ENCODE measurements at regions of chr2 and their contacts with region 1.

Region 1: DNA sequence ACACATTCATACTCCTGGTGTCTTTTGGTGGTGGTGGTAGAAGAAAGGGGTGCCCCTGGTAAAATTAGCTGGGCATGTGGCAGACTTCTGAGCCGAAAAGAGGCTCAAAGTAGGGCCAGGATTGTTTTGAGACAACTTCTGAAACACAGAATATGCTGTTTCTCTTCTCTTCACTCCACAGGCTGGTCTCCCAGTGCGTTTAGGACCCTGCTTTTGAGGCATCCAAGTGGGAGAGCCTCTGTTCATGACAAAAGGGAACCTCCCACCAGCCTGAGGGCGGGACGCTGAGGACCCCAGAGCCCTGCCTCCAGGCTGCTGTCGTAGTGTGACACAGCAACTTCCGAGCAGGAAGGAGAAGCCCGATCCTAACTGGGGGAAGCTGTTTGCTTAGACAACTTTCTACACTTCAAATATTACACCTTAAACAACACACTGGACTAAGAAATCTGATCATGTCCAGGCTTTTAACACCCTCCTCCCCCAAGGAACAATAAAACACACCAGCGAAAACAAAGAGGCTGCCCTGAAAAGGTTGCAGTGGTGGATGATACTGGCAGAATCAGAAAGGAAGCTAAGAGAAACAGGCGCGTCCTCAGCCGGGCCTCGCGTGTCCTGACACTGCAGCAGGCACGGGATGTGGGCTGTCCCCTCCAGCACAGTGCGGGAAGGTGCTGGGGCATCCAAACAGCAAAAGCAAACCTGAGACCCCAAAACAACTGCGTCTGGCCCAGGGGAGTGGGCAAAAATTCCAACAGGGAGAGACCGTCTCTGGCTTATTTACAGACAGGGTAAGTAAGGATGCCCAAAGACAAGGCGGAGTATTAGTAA is 9.3 kb downstream of the SERTAD2 start:
- DNase-seq: no peak
- H3K4me3 ChIP-seq: peak overlapping the region in 1 of 2 experiments; percentile 22; a peak in 2 of 4 replicates
- H3K27ac ChIP-seq: peak overlapping the region in 1 of 2 experiments; percentile 38; a peak in 3 of 4 replicates
- H3K4me1 ChIP-seq: peaks cover 20 to 62% of the 10 kb centered on the region in 2 experiments
- H3K27me3 ChIP-seq: no peaks in the 10 kb centered on the region
- CTCF ChIP-seq: no peak
- EP300 ChIP-seq: no peak
- RAD21 ChIP-seq: no peak

Region 2: DNA sequence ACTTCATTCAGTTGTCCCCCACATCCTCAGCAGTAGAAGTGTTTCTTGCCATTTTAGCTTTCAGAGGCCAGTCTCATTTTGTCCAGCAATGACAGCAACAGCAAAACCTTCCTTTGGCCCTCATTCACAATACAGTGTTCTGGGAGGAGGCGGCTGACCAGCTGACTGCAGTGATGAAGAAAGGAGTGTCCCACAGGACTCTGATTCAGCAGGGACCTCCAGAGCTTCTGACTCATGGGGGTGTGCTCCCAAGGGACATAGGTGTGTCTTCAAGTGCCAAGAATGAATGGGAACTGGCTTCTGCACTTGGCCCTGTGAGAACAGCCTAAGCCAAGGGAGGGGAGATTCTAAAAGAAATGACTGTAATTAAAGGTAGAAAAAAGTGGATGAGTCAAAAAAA is 353.2 kb before region 1 on chr2:
- CTCF ChIA-PET with region 1: no interaction called
- POLR2A ChIA-PET with region 1: no interaction called
- DNase-seq: no peak
- H3K4me3 ChIP-seq: no peak overlapping the region
- H3K27ac ChIP-seq: no peak overlapping the region
- H3K4me1 ChIP-seq: peaks cover 0 to 7% of the 10 kb centered on the region in 2 experiments; a peak in 1 of 4 replicates
- H3K27me3 ChIP-seq: no peaks in the 10 kb centered on the region; the same call in 1 of the 2 replicates
- CTCF ChIP-seq: no peak
- EP300 ChIP-seq: no peak
- RAD21 ChIP-seq: no peak

Region 3: DNA sequence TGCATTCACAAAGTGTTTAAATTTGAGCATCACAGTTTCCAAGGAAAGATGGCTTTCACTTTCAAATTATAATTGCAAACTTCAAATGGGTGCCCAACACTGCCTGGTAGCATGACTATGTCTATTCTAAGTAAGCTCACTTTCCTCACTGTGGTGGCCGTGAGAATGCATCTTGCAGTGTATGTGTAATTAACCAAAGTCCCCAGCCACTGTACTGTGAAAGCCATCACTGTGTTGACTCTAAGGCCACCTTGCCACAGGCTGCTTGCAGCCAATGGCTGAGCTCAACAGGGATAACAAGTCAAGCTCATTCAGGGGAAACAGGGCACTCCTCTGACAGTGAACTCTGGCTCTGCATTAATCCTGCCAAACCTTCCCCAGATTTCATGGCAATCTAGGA is 233.7 kb before region 1 on chr2:
- CTCF ChIA-PET with region 1: no interaction called
- POLR2A ChIA-PET with region 1: no interaction called
- DNase-seq: no peak
- H3K4me3 ChIP-seq: no peak overlapping the region
- H3K27ac ChIP-seq: no peak overlapping the region
- H3K4me1 ChIP-seq: no peaks in the 10 kb centered on the region; a peak in 1 of 4 replicates
- H3K27me3 ChIP-seq: peaks cover 6% of the 10 kb centered on the region; the same call in 1 of the 2 replicates
- CTCF ChIP-seq: no peak
- EP300 ChIP-seq: no peak
- RAD21 ChIP-seq: no peak

Region 4: GRCh38 chr2:64548761-64549160 is 95.6 kb before region 1 on chr2:
- CTCF ChIA-PET with region 1: no interaction called
- POLR2A ChIA-PET with region 1: no interaction called
- DNase-seq: no peak
- H3K4me3 ChIP-seq: no peak overlapping the region
- H3K27ac ChIP-seq: no peak overlapping the region
- H3K4me1 ChIP-seq: no peaks in the 10 kb centered on the region
- H3K27me3 ChIP-seq: no peaks in the 10 kb centered on the region
- CTCF ChIP-seq: no peak
- EP300 ChIP-seq: no peak
- RAD21 ChIP-seq: no peak

Region 5: DNA sequence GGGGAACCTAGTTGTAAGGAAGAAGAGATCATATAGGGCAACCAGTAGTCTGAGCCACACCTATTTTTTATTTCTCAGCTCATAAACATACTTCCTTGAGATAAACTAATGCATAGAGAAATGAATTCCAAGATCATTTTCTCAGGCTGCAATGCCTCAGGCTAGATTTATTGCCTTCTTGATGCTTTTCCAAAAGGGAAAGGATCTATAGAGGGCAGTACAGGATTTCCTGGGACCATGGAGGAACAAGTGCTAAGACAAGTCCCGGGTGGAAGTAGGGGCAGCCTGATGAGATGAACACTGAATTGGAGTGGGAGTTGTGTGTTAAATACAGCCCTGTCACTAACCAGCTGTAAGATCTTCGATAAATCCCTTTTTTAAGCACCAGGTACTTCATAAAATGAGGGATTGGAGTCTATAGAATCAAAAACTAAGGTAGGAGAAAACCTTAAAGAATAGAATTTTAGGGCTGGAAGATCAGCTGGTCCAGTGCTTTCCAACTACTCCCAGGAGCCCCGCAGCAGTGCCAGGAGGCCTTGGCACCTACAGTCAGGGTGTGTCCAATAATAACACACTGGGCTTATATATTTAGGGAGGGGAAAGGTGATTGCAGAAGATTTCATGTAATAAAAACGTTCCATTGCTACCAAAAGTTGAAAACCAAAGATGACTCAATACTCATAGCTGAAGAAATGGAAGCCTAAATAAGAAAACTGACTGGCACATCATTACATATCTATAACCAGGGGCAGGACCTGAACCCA is 48.8 kb before region 1 on chr2:
- CTCF ChIA-PET with region 1: interaction called, 15 read pairs
- POLR2A ChIA-PET with region 1: no interaction called
- DNase-seq: no peak
- H3K4me3 ChIP-seq: no peak overlapping the region
- H3K27ac ChIP-seq: 0 out of 4 replicates have a peak overlapping the region, but pooled peaks of 1 of the 2 experiments have one; percentile 74
- H3K4me1 ChIP-seq: peaks cover 10 to 20% of the 10 kb centered on the region in 2 experiments; a peak in 1 of 4 replicates
- H3K27me3 ChIP-seq: no peaks in the 10 kb centered on the region
- CTCF ChIP-seq: peak; percentile 27
- EP300 ChIP-seq: no peak
- RAD21 ChIP-seq: peak; percentile 60

Region 6: DNA sequence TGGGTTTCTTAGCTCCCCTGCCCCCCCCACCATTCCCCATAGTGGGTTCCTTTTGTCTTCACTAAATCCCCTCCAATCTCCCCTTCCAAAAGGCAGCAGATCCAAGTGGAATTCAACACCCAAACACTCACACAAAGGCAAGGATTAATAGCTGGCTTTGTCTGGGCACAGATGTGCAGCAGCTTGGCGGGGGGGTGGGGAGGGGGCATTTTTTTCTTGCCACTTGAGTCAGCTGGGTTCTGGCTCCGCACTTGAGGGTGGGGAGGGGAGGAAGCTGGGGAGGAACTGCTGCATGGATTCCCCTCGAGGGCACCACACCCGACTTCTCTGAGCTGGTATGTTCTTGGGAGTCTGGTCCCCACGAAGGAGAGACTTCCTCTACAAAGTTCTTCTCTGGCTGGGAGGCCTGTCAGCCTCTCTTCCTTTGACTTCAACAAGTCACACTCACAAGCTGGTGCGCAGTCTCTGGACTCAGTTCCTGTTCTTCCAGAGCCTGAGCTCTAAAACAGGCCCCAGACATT is 26.7 kb before region 1 on chr2:
- CTCF ChIA-PET with region 1: interaction called, 16 read pairs
- POLR2A ChIA-PET with region 1: no interaction called
- DNase-seq: no peak
- H3K4me3 ChIP-seq: no peak overlapping the region
- H3K27ac ChIP-seq: no peak overlapping the region
- H3K4me1 ChIP-seq: peaks cover 0 to 10% of the 10 kb centered on the region in 2 experiments; a peak in 1 of 4 replicates
- H3K27me3 ChIP-seq: no peaks in the 10 kb centered on the region
- CTCF ChIP-seq: no peak
- EP300 ChIP-seq: no peak
- RAD21 ChIP-seq: no peak

Region 7: DNA sequence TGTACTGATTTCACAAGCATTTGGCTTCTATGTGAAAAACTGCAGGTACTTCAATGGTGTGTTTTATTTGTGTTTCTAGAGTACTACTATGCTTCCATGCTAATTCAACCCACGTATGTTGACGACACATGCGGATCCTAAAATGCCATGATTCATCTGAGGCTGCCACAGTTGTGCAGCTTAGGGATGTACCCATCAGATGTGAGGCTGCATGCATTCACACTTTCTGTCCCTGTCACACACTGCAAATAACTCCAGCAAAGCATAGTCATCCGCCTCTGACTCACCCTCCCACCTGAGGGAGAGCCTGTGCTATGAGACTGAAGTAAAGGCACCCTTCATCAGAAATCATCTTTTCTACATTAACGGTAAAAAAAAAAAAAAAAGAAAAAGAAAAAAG is 31.5 kb after region 1 on chr2:
- CTCF ChIA-PET with region 1: interaction called, 11 read pairs
- POLR2A ChIA-PET with region 1: no interaction called
- DNase-seq: no peak
- H3K4me3 ChIP-seq: no peak overlapping the region
- H3K27ac ChIP-seq: no peak overlapping the region
- H3K4me1 ChIP-seq: peaks cover 0 to 11% of the 10 kb centered on the region in 2 experiments; a peak in 3 of 4 replicates
- H3K27me3 ChIP-seq: no peaks in the 10 kb centered on the region
- CTCF ChIP-seq: no peak
- EP300 ChIP-seq: no peak
- RAD21 ChIP-seq: no peak

Region 8: GRCh38 chr2:64792307-64792706 is 147.9 kb after region 1 on chr2:
- CTCF ChIA-PET with region 1: interaction called, 14 read pairs
- POLR2A ChIA-PET with region 1: no interaction called
- DNase-seq: peak; percentile 22
- H3K4me3 ChIP-seq: no peak overlapping the region
- H3K27ac ChIP-seq: no peak overlapping the region; a peak in 1 of 4 replicates
- H3K4me1 ChIP-seq: no peaks in the 10 kb centered on the region
- H3K27me3 ChIP-seq: no peaks in the 10 kb centered on the region
- CTCF ChIP-seq: 0 out of 2 replicates have a peak, but pooled peaks have one; percentile 17
- EP300 ChIP-seq: no peak
- RAD21 ChIP-seq: peak; percentile 48

Region 9: GRCh38 chr2:64865073-64865830 is 220.9 kb after region 1 on chr2:
- CTCF ChIA-PET with region 1: interaction called, 23 read pairs
- POLR2A ChIA-PET with region 1: interaction called, 5 read pairs
- DNase-seq: peak; percentile 95
- H3K4me3 ChIP-seq: peak overlapping the region; percentile 52 to 63
- H3K27ac ChIP-seq: peak overlapping the region; percentile 86 to 89
- H3K4me1 ChIP-seq: peaks cover 0 to 8% of the 10 kb centered on the region in 2 experiments; a peak in 1 of 4 replicates
- H3K27me3 ChIP-seq: no peaks in the 10 kb centered on the region
- CTCF ChIP-seq: peak; percentile 56; the same call in 1 of the 2 replicates
- EP300 ChIP-seq: peak in 1 of 2 experiments; percentile 27; a peak in 3 of 4 replicates
- RAD21 ChIP-seq: peak; percentile 76

Region 10: DNA sequence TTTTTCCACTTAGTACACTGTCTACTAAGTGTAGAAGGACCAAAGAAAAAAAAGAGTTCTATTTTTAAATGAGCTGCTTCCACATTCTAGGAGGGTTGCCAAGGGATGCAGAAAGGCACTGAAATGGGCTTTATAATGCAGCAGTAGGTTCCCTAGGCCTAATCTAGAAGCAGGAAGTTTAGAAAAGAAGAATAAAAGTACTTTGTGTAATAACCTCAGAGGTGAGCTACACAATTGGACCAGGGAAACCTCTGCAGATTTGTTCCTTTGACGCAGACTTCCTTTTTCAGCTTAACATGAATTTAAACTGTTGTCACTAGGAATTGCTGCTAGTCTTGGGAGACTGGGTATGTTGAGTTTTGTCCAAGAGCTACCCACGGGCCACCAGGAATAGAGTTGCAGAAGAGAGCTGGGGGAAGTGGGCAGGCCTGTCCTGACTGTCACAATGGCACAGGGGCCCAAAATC is 520.1 kb after region 1 on chr2:
- CTCF ChIA-PET with region 1: no interaction called
- POLR2A ChIA-PET with region 1: no interaction called
- DNase-seq: no peak
- H3K4me3 ChIP-seq: no peak overlapping the region
- H3K27ac ChIP-seq: no peak overlapping the region
- H3K4me1 ChIP-seq: no peaks in the 10 kb centered on the region
- H3K27me3 ChIP-seq: no peaks in the 10 kb centered on the region
- CTCF ChIP-seq: no peak
- EP300 ChIP-seq: no peak
- RAD21 ChIP-seq: no peak

Measured in SK-N-SH (cell line).